ENCODE measurements at regions of chr5 and their contacts with region 1.

Region 1: DNA sequence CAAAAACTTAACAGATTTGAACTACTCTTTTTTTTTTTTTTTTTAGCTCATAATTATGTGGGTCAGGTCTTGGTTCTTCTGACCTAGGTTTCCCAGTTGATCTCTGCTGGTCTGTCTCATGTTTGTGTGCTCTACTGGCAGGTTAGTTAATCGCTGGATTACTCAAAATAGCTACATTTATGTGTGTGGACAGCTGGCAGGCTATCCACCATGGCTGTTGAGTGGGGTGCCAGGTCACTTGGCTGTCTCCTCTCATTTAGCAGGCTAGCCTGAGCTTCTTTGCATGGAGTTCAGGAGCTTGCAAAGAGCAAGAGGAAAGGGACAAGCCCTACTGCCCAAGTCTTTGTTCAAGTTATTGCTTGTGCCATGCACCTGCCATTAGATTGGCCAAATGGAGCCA is 9.3 kb downstream of the ADCY2 start:
- DNase-seq: no peak
- ATAC-seq: no peak

Region 2: DNA sequence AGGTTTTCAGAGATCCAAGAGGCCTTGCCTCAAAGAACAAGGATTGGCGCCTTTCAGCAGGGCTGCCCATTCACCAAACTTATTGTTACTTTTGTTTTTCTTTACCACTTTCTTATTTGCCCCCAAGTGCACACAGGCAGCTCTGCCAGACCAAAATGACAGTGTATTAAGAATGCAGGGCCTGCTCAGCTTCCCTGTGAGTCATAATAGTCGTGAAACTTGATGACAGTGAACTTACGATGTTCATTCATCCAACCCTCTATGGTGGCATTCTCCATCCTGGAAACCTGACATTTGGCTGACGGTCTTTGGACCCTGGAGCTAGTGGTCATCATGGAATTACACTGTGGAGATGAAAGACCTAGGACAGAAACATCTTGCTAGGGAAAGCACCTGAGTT is 912.3 kb before region 1 on chr5:
- intact Hi-C with region 1: no loop called
- DNase-seq: no peak
- ATAC-seq: no peak

Region 3: DNA sequence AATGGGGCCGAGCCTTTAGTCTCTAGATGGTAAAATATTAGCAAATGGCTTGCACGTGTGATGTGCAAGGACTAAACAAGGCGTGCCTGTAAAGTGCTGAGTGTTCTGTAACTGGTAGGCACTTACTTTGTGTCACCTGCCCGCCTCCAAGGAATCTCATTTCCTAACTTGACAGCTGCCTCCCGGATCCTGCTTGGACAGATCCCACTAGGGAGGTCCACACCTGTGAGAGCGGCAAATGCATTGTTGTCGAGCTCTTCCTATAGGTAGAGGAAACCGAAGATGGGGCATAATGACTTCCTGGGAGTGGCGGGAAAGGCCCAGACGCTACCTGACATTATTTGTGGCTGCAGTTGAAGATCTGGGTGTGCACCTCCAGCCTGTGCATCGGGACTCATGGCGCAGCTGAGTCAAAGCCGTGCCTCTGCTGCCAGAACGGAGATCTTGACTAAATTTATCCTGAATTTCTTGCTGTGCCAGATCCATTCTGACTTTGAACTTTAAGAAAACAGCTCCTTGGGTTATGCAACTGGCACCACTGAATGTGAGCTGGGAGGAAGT is 612.3 kb before region 1 on chr5:
- intact Hi-C with region 1: no loop called
- DNase-seq: no peak
- ATAC-seq: no peak

Region 4: DNA sequence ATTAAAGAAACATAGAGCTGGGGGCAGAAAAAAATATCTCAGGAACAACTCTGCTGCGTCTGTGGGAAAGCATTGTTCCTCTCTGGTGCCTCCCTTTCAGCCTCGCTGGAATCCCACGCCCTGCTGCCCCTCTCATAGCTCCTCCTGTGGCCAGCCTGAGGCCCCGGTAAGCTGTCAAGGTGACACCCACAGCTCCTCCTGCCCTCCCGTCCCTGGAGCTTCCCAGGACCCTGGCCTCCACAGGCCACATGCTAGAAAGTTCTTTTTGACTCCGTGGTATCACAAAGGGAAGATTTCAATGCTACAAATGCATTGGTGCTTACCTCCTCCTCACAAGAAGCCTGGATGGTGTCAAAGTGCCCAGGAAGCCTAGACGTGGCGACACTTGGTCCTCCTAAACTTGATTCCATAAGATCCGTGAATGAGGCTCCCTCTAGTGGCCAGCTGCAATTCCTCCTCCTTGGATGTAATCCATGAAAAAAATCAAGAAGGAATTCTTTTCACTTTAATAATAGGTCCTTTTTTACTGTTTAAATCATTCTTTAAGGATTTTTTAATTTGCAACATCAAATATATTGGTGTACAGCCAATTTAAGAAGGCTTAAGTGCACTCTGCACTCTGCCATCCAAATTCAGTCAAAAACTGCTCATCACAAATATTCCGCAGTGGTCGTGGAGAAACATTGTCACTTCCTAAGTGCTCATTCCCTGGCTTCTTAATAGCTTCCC is 340.8 kb after region 1 on chr5:
- intact Hi-C with region 1: loop called in 1 of 2 experiments (anchors 10 kb)
- DNase-seq: peak; percentile 49 to 78
- ATAC-seq: peak; percentile 58